ENCODE measurements at regions of chr2 and their contacts with region 1.

Region 1: GRCh38 chr2:71460595-71461303 is 7.4 kb downstream of the DYSF start:
- DNase-seq: peak in 2 of 3 donors; percentile 51 to 73
- ATAC-seq: peak; percentile 47 to 61
- H3K4me3 ChIP-seq: no peak overlapping the region
- H3K27ac ChIP-seq: peak overlapping the region; percentile 56
- H3K4me1 ChIP-seq: peaks cover 29% of the 10 kb centered on the region
- H3K27me3 ChIP-seq: no peaks in the 10 kb centered on the region

Region 2: DNA sequence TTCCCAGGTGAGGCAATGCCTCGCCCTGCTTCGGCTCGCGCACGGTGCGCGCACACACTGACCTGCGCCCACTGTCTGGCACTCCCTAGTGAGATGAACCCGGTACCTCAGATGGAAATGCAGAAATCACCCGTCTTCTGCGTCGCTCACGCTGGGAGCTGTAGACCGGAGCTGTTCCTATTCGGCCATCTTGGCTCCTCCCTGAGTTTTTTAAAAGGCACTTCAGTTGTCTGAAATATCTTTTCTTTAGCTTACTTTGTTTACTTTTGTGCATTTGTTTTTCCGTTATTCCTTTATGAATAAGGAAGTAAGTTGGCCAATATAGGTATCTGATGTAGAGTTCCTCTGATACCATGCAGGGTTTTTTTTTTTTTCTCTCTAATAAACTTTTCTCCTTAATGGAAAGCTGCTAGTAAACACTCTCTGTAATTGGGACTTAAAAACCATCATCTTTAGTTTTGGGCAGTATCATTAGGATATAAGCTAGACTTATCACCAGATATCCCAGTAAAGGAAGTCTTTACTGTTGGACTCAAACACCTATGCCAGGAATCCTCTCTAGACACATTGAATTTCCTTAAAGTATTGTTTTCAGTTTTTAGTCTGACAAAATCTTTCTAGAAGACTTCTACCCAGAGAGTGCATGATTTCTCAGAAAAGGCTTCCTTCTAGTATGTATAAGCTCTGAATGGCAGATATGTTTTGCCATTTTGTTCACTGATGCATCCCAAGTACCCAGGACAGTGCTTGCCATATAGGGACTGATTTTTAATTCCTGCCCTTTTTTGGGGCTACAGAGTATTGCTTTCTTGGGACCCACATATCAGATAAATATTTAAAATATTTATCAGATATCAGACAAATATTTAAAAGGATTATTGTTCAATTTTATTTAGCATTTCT is 43.2 kb before region 1 on chr2:
- intact Hi-C with region 1: no loop called
- DNase-seq: no peak
- ATAC-seq: no peak
- H3K4me3 ChIP-seq: peak overlapping the region; percentile 35
- H3K27ac ChIP-seq: no peak overlapping the region
- H3K4me1 ChIP-seq: no peaks in the 10 kb centered on the region
- H3K27me3 ChIP-seq: no peaks in the 10 kb centered on the region

Region 3: DNA sequence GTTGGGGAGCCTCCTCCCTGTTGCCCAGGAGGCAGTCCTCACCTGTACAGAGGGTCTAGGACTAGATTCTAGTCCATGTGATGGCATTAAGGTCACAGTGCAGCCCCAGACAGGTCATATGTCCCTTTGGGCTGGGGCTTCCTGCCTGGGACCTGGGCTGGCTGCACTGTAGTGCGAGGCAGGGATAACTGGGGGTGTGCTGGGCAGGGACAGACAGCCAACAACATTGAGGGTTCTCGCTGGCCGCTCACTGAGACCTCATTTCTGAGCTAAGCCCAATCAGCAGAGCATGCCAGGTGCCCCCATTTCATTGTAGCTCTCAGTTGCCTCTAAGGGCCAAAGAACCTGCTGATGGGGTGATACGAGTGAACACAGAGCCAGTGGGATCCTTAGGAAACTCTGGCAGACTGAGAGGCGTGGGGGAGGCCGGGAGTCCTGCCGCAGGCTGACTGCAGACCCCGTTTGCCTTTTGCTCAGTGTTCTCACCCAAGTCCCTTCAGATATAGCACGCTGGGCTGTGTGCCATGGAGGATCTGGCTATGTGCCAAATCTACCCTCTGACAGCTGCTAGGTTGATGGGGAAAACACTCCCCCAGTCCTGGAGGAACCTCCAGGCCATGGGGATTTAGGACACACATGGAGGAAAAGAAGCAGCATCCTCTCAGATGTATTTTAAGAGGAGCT is 44.5 kb after region 1 on chr2:
- intact Hi-C with region 1: loop called in 3 of 4 experiments (anchors 5 kb)
- DNase-seq: peak in 2 of 3 donors; percentile 79 to 83
- ATAC-seq: peak; percentile 4 to 22
- H3K4me3 ChIP-seq: no peak overlapping the region
- H3K27ac ChIP-seq: peak overlapping the region; percentile 2
- H3K4me1 ChIP-seq: peaks cover 29% of the 10 kb centered on the region
- H3K27me3 ChIP-seq: no peaks in the 10 kb centered on the region